CD4-positive, alpha-beta memory T cell (primary cell): ENCODE measurements at regions of chr5 and their contacts with region 1.

Region 1: DNA sequence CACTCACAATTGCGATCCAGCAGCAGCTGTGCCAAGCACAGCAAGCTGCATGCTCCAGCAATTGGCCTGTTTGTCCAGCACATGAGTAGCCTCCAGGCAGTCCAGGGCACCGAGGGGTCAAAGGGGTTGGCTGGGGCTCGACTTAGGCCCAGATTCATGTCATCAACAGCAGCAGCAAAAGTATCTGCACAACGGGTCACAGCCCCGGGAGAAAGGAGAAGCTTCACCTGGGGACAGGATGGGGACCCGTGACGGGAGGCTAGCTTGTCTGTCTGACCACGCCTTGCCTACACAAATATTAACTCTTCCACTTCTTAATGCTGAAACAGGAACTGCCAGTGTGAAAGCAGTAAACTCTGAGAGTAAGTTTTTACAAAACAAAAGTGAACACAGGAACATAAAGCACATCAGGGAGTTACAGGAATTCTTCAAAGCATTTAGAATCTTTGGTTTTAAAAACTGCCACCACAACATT is 191.2 kb downstream of the PIK3R1 start:
- DNase-seq: peak in 1 of 5 donors; percentile 6
- H3K4me3 ChIP-seq: no peak overlapping the region
- H3K4me3 Mint-ChIP-seq: peak overlapping the region in 7 of 8 donors; percentile 23 to 80 (median 57)
- H3K27ac ChIP-seq: no peak overlapping the region
- H3K27ac Mint-ChIP-seq: peak overlapping the region in 5 of 7 donors; percentile 61 to 87 (median 70)
- H3K4me1 ChIP-seq: peaks cover 21% of the 10 kb centered on the region
- H3K4me1 Mint-ChIP-seq: peaks cover 20 to 32% (median 21%) of the 10 kb centered on the region in 4 donors
- H3K27me3 ChIP-seq: no peaks in the 10 kb centered on the region
- H3K27me3 Mint-ChIP-seq: peaks cover 0 to 2% of the 10 kb centered on the region in 2 donors

Region 2: DNA sequence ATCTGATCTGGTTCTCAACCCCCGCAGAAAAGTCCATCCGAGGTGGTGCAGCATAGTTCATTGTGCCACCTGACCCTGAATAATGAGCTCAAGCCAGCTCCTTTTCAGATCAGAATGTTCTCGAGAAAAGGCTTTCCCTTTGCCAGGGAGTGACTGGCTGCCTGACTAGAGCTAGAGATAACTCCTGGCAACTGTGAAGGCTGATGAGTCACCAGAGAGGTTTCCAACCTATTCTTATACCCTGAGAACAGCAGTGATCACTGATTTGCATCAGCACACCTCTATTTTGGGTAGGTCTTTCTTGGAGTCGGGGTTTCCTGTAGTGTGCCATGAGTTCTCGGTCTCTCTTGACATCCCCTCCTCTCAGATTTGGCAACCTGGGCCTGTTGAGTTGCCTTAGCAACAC is 63.4 kb before region 1 on chr5:
- CTCF ChIA-PET with region 1: no interaction called
- POLR2A ChIA-PET with region 1: no interaction called
- intact Hi-C with region 1: loop called (anchors 10 kb)
- DNase-seq: peak in 1 of 5 donors; percentile 1
- H3K4me3 ChIP-seq: no peak overlapping the region
- H3K4me3 Mint-ChIP-seq: no peak overlapping the region
- H3K27ac ChIP-seq: no peak overlapping the region
- H3K27ac Mint-ChIP-seq: no peak overlapping the region
- H3K4me1 ChIP-seq: peaks cover 20% of the 10 kb centered on the region
- H3K4me1 Mint-ChIP-seq: peaks cover 11 to 17% (median 16%) of the 10 kb centered on the region in 4 donors
- H3K27me3 ChIP-seq: no peaks in the 10 kb centered on the region
- H3K27me3 Mint-ChIP-seq: peaks cover 0 to 1% of the 10 kb centered on the region in 2 donors